Calu3 (cell line): ENCODE measurements at regions of chr3 and their contacts with region 1.

Region 1: GRCh38 chr3:154684021-154684420 is 254.0 kb upstream of the GPR149 start:
- DNase-seq: no peak
- H3K4me3 Mint-ChIP-seq: no peak overlapping the region
- H3K27ac Mint-ChIP-seq: no peak overlapping the region
- H3K4me1 Mint-ChIP-seq: no peaks in the 10 kb centered on the region
- H3K27me3 Mint-ChIP-seq: no peaks in the 10 kb centered on the region
- CTCF ChIP-seq: no peak

Region 2: GRCh38 chr3:154730186-154730585 is 46.2 kb after region 1 on chr3:
- CTCF ChIA-PET with region 1: interaction called, 14 read pairs
- intact Hi-C with region 1: no loop called
- DNase-seq: no peak
- H3K4me3 Mint-ChIP-seq: no peak overlapping the region
- H3K27ac Mint-ChIP-seq: no peak overlapping the region
- H3K4me1 Mint-ChIP-seq: no peaks in the 10 kb centered on the region
- H3K27me3 Mint-ChIP-seq: no peaks in the 10 kb centered on the region
- CTCF ChIP-seq: no peak